Activated CD8-positive, alpha-beta T cell treated with anti-CD3 and anti-CD28 coated beads for 36 hours (primary cell): ENCODE measurements at regions of chr5 and their contacts with region 1.

Region 1: DNA sequence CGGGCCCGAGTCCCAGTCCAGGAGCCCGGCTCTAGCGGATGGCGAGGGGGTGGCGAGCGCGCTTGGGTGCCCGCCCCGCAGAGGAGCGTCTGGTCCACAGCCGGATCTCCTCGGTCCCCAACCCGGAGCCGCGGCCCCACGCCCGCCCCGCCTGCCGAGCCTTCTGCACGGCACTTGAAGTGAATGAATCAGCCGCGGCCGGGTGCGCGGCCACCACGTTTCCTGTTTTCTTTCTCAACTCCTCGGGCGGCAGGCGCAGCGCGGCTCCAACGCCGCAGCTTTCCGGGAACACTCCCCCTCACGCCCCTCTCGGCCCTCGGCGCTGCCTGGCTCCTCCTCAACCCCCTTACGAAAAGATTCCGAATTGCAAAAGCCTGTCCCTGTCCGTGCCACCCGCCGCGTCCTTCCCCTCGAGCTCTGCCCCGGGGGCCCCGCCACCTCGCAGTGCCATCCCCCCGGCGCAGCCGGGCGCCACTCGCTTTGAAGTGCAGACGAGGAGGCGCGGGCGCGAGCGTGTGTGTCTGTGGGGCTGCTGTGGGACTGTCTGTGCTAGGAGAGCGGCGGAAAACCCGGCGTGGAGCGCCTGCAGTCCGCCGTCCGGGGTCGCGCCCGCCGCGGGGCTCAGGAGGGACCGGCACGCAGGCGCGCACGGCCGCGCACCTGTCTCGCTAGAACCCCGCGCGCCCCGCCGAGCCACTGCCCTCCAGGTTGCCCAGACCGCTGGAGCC is 456.6 kb downstream of the RAB3C start:
- DNase-seq: peak; percentile 96
- ATAC-seq: peak; percentile 74
- H3K4me3 Mint-ChIP-seq: peak overlapping the region; percentile 89
- H3K27ac Mint-ChIP-seq: peak overlapping the region; percentile 85
- H3K4me1 Mint-ChIP-seq: peaks cover 38% of the 10 kb centered on the region
- H3K27me3 Mint-ChIP-seq: no peaks in the 10 kb centered on the region
- CTCF ChIP-seq: no peak

Region 2: DNA sequence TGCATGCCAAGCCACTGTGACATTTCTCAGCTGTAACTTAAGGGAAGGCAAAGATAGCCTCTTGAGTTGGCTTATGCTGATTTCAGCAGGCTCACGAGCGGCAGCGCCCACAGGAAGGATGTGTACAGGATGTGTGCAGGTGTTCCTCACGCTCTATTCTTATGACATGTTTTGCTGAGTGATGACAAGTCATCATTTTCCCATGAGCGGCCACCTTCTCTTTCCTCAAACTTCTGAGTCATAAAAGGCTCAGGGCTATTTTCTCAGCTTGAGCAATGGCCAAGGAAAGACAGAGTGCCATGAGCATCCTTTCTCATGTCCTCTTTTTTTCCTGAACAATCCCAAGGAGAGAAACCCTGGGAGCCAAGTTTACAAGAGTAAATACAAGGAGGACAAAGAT is 945.4 kb before region 1 on chr5:
- CTCF ChIA-PET with region 1: no interaction called
- POLR2A ChIA-PET with region 1: no interaction called
- intact Hi-C with region 1: no loop called
- DNase-seq: peak; percentile 20
- ATAC-seq: peak; percentile 34
- H3K4me3 Mint-ChIP-seq: no peak overlapping the region
- H3K27ac Mint-ChIP-seq: no peak overlapping the region
- H3K4me1 Mint-ChIP-seq: no peaks in the 10 kb centered on the region
- H3K27me3 Mint-ChIP-seq: peaks cover 2% of the 10 kb centered on the region
- CTCF ChIP-seq: no peak

Region 3: GRCh38 chr5:59020611-59021285 is 18.7 kb before region 1 on chr5:
- CTCF ChIA-PET with region 1: interaction called, 24 read pairs
- POLR2A ChIA-PET with region 1: interaction called, 4 read pairs
- intact Hi-C with region 1: no loop called
- DNase-seq: peak; percentile 55
- ATAC-seq: peak; percentile 87
- H3K4me3 Mint-ChIP-seq: peak overlapping the region; percentile 30
- H3K27ac Mint-ChIP-seq: peak overlapping the region; percentile 92
- H3K4me1 Mint-ChIP-seq: peaks cover 60% of the 10 kb centered on the region
- H3K27me3 Mint-ChIP-seq: no peaks in the 10 kb centered on the region
- CTCF ChIP-seq: no peak

Region 4: GRCh38 chr5:59099270-59099994 is 60.0 kb after region 1 on chr5:
- CTCF ChIA-PET with region 1: interaction called, 5 read pairs
- POLR2A ChIA-PET with region 1: interaction called, 3 read pairs
- intact Hi-C with region 1: loop called (anchors 5 kb)
- DNase-seq: peak; percentile 75
- ATAC-seq: peak; percentile 94
- H3K4me3 Mint-ChIP-seq: peak overlapping the region; percentile 11
- H3K27ac Mint-ChIP-seq: peak overlapping the region; percentile 74
- H3K4me1 Mint-ChIP-seq: peaks cover 39% of the 10 kb centered on the region
- H3K27me3 Mint-ChIP-seq: no peaks in the 10 kb centered on the region
- CTCF ChIP-seq: no peak

Region 5: DNA sequence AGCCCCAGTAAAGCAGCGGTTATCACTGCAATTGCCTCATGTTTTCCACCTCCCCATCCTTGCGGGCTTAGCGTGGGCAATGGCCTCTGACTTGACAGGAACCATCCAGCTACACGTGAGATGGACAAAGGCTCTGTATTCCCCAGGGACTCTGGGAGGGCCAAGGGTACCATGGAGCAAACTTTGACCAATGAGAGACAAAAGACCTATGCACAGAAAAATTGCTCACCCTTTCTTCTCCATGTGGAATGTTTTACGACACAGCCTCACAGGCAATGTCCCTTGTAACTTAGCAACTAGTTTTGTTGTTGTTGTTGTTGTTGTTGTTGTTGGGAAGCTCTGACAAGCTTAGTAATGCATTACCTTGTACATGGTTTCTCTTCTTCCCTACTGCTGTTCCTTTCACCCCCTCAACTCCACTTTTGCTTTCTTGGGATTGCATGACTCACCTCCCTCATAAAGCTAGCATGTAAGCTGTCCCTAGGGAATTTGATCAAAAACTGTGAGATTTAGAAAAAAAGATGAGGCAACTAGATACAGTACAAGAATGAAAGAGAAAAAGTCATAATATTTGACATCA is 94.3 kb after region 1 on chr5:
- CTCF ChIA-PET with region 1: interaction called, 36 read pairs
- POLR2A ChIA-PET with region 1: interaction called, 35 read pairs
- intact Hi-C with region 1: no loop called
- DNase-seq: no peak
- ATAC-seq: no peak
- H3K4me3 Mint-ChIP-seq: no peak overlapping the region
- H3K27ac Mint-ChIP-seq: no peak overlapping the region
- H3K4me1 Mint-ChIP-seq: peaks cover 52% of the 10 kb centered on the region
- H3K27me3 Mint-ChIP-seq: no peaks in the 10 kb centered on the region
- CTCF ChIP-seq: no peak

Region 6: GRCh38 chr5:59180515-59180914 is 141.1 kb after region 1 on chr5:
- CTCF ChIA-PET with region 1: interaction called, 135 read pairs
- POLR2A ChIA-PET with region 1: interaction called, 4 read pairs
- intact Hi-C with region 1: loop called (anchors 2 kb)
- DNase-seq: no peak
- ATAC-seq: no peak
- H3K4me3 Mint-ChIP-seq: no peak overlapping the region
- H3K27ac Mint-ChIP-seq: no peak overlapping the region
- H3K4me1 Mint-ChIP-seq: peaks cover 6% of the 10 kb centered on the region
- H3K27me3 Mint-ChIP-seq: peaks cover 3% of the 10 kb centered on the region
- CTCF ChIP-seq: no peak

Region 7: DNA sequence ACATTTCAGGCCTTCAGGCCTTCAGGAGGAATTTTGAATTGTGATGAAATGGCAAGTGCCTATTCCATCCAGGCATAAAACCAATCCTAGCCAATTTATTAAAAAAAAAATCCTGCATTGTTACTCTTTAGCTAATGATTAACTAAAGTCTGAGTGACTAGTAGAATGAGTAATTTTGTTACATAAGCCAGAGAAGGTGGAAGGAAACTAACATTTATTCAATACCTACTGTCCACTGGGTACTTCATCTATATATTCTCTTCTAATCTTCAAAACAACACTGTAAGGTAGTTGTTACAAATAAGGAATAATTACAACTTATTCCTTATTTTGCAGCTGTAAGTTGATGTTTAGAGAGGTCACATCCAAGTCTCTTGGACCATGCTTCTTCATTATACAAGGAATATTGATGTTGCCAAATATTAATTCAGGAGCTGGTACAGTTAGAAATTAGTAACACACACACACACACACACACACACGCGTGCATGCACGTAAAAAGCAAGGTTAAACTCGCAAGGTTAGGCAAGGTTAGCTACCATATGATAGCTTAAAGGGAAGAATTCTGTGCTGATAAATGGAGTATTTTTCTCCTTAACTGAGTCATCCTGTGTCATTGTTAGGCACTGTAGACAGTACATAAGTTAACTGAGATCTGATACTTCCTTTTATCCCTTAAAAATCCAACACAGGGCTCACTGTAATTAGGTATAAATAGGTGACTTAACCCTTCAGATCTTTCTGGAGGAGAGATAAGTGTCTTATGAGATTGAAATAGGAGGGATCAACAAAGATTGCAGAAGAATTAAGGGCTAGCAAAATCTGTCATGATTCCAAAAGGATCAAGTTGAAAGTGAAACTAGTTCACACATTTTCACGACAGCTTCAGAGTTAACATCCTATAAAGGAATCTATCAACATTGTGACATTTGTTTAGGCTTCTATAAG is 257.1 kb after region 1 on chr5:
- CTCF ChIA-PET with region 1: no interaction called
- POLR2A ChIA-PET with region 1: no interaction called
- intact Hi-C with region 1: no loop called
- DNase-seq: no peak
- ATAC-seq: no peak
- H3K4me3 Mint-ChIP-seq: no peak overlapping the region
- H3K27ac Mint-ChIP-seq: no peak overlapping the region
- H3K4me1 Mint-ChIP-seq: peaks cover 11% of the 10 kb centered on the region
- H3K27me3 Mint-ChIP-seq: no peaks in the 10 kb centered on the region
- CTCF ChIP-seq: no peak